ENCODE measurements at regions of chr2 and their contacts with region 1.

Region 1: GRCh38 chr2:238784671-238785527 is 63.0 kb upstream of the TWIST2 start:
- DNase-seq: no peak
- ATAC-seq: no peak
- H3K4me3 Mint-ChIP-seq: no peak overlapping the region
- H3K27ac Mint-ChIP-seq: no peak overlapping the region
- H3K4me1 Mint-ChIP-seq: no peaks in the 10 kb centered on the region
- H3K27me3 Mint-ChIP-seq: peaks cover 2% of the 10 kb centered on the region
- CTCF ChIP-seq: no peak

Region 2: GRCh38 chr2:238256594-238257104 is 528.2 kb before region 1 on chr2:
- CTCF ChIA-PET with region 1: no interaction called
- POLR2A ChIA-PET with region 1: no interaction called
- intact Hi-C with region 1: loop called (anchors 5 kb)
- DNase-seq: peak; percentile 46
- ATAC-seq: peak; percentile 97
- H3K4me3 Mint-ChIP-seq: no peak overlapping the region
- H3K27ac Mint-ChIP-seq: no peak overlapping the region
- H3K4me1 Mint-ChIP-seq: no peaks in the 10 kb centered on the region
- H3K27me3 Mint-ChIP-seq: no peaks in the 10 kb centered on the region
- CTCF ChIP-seq: no peak

Measured in activated B cell treated with CpG ODN at 0.5 μM for 24 hours (primary cell).